Mucosa of descending colon (tissue), 3 donors: ENCODE measurements at regions of chr2 and their contacts with region 1.

Region 1: GRCh38 chr2:37389989-37390765 is 45.7 kb downstream of the QPCT start:
- DNase-seq: peak in 1 of 3 donors; percentile 24
- ATAC-seq: peak; percentile 91
- H3K4me3 ChIP-seq: no peak overlapping the region
- H3K4me1 ChIP-seq: no peaks in the 10 kb centered on the region
- CTCF ChIP-seq: no peak

Region 2: DNA sequence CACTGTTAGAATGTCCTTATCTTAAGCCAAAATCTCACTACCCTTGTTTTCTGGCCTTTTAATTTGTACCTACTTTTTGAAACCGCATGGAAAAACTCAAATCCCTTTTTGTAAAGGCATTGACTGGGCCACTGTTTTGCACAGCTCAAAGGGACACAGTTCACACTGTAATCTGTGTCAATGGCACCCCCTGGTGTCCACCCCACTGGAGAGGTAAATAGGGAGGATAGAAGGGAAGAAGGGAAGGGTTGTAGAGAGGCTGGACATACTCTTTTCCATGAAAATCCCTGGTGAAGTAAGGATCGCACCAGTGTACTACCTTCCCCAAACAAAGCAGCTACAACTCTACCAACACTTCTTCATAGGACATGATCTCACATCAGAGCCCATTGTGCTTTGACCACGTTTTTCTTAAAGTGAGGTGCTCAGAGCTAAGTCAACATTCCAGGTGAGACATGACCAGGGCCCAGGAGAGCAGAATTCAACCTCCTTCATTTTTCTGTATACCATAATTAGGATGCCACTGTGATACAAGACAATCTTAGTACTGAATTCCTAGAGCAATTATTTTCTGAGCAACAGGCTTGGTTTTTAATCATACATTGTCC is 442.5 kb after region 1 on chr2:
- intact Hi-C with region 1: loop called in 1 of 2 experiments (anchors 5 kb)
- DNase-seq: peak; percentile 71 to 98 (median 89)
- ATAC-seq: peak; percentile 97
- H3K4me3 ChIP-seq: no peak overlapping the region
- H3K4me1 ChIP-seq: no peaks in the 10 kb centered on the region
- CTCF ChIP-seq: peak; percentile 51

Region 3: GRCh38 chr2:37877457-37878315 is 487.5 kb after region 1 on chr2:
- intact Hi-C with region 1: loop called (anchors 5 to 10 kb)
- DNase-seq: peak in 1 of 3 donors; percentile 69
- ATAC-seq: peak; percentile 70
- H3K4me3 ChIP-seq: no peak overlapping the region
- H3K4me1 ChIP-seq: peaks cover 3% of the 10 kb centered on the region
- CTCF ChIP-seq: peak; percentile 48